PC-3 (cell line): ENCODE measurements at regions of chr2 and their contacts with region 1.

Region 1: GRCh38 chr2:190511104-190511503 is 23.4 kb downstream of the NEMP2 start:
- DNase-seq: peak; percentile 61
- ATAC-seq: peak; percentile 59
- H3K4me3 ChIP-seq: no peak overlapping the region
- H3K27ac ChIP-seq: no peak overlapping the region
- H3K4me1 ChIP-seq: no peaks in the 10 kb centered on the region
- H3K27me3 ChIP-seq: no peaks in the 10 kb centered on the region
- CTCF ChIP-seq: peak; percentile 82

Region 2: GRCh38 chr2:190088917-190089316 is 422.2 kb before region 1 on chr2:
- CTCF ChIA-PET with region 1: no interaction called
- POLR2A ChIA-PET with region 1: no interaction called
- intact Hi-C with region 1: loop called (anchors 5 kb)
- DNase-seq: peak; percentile 85
- ATAC-seq: peak; percentile 69
- H3K4me3 ChIP-seq: no peak overlapping the region
- H3K27ac ChIP-seq: no peak overlapping the region
- H3K4me1 ChIP-seq: no peaks in the 10 kb centered on the region
- H3K27me3 ChIP-seq: no peaks in the 10 kb centered on the region
- CTCF ChIP-seq: peak; percentile 87

Region 3: GRCh38 chr2:190343500-190344275 is 167.4 kb before region 1 on chr2 and contains the start of gene INPP1:
- CTCF ChIA-PET with region 1: no interaction called
- POLR2A ChIA-PET with region 1: no interaction called
- intact Hi-C with region 1: loop called (anchors 2 kb)
- DNase-seq: peak; percentile 46
- ATAC-seq: peak; percentile 67
- H3K4me3 ChIP-seq: peak within 1 kb of the TSS; percentile 94
- H3K27ac ChIP-seq: peak within 1 kb of the TSS; percentile 50
- H3K4me1 ChIP-seq: peaks cover 9% of the 10 kb centered on the region
- H3K27me3 ChIP-seq: no peaks in the 10 kb centered on the region
- CTCF ChIP-seq: no peak
- total RNA-seq, gene INPP1: 4.0 and 5.6 TPM in 2 replicates

Region 4: DNA sequence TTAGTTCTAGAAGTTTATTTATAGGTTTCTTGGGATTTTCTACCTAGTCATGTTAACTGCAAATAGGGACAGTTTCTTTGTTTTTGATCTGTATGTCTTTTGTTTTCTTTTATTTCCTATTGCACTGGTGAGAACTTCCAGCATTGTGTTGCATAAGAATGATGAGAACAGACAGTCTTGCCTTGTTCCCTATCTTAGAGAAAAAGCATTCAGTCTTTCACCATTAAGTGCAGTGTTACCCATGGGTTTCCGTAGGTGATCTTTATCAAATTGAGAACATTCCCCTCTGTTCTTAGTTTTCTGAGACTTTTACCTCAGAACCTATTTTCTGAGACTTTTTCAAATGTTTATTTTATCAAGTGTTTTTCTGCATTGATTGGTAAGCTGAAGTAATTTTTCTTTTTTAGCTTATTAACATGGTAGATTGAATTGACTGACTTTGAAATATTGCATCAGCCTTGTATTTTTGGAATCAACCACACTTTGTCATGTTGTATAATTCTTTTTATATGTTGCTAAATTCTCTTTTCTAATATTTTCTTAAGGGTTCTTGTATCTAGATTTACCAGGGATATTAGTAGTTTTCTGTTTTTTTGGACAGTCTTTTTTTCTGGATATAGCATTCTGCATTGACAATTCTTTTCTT is 85.8 kb before region 1 on chr2:
- CTCF ChIA-PET with region 1: no interaction called
- POLR2A ChIA-PET with region 1: no interaction called
- intact Hi-C with region 1: no loop called
- DNase-seq: no peak
- ATAC-seq: no peak
- H3K4me3 ChIP-seq: no peak overlapping the region
- H3K27ac ChIP-seq: no peak overlapping the region
- H3K4me1 ChIP-seq: no peaks in the 10 kb centered on the region
- H3K27me3 ChIP-seq: no peaks in the 10 kb centered on the region
- CTCF ChIP-seq: no peak

Region 5: GRCh38 chr2:190468814-190469569 is 42.1 kb before region 1 on chr2:
- CTCF ChIA-PET with region 1: no interaction called
- POLR2A ChIA-PET with region 1: no interaction called
- intact Hi-C with region 1: loop called (anchors 1 kb)
- DNase-seq: peak; percentile 98
- ATAC-seq: peak; percentile 81
- H3K4me3 ChIP-seq: no peak overlapping the region
- H3K27ac ChIP-seq: peak overlapping the region; percentile 89
- H3K4me1 ChIP-seq: peaks cover 40% of the 10 kb centered on the region
- H3K27me3 ChIP-seq: no peaks in the 10 kb centered on the region
- CTCF ChIP-seq: no peak

Region 6: DNA sequence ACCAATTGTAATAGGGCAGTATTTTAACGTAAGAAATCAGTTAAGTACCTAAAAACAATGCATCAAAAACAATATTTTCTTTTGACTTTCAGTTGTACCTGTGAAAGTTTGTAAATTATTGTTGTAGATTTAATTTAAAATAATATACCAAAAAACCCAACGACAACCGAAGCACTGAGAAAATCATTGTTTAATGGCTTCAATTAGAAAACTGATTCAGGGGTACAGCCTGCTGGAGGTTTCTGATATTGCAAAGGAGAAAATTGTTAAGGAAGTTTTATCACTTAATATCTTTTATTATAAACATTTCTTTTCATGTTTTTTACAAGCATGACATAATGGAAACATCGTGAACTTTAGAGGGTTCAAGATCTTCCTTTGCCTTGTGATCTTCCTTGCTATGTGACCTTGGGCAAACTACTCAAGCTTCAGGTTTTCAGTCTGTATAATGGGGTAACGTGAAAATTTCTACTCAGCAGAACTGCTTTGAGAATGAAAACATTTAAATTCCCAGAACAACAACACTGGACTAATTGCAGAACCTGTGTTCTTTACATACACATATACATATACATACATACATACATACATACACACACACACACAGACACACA is 293.2 kb after region 1 on chr2:
- CTCF ChIA-PET with region 1: no interaction called
- POLR2A ChIA-PET with region 1: no interaction called
- intact Hi-C with region 1: loop called (anchors 2 kb)
- DNase-seq: peak; percentile 69
- ATAC-seq: no peak
- H3K4me3 ChIP-seq: no peak overlapping the region
- H3K27ac ChIP-seq: no peak overlapping the region
- H3K4me1 ChIP-seq: peaks cover 4% of the 10 kb centered on the region
- H3K27me3 ChIP-seq: no peaks in the 10 kb centered on the region
- CTCF ChIP-seq: peak; percentile 79